BJ (cell line): ENCODE measurements at regions of chr5 and their contacts with region 1.

Region 1: DNA sequence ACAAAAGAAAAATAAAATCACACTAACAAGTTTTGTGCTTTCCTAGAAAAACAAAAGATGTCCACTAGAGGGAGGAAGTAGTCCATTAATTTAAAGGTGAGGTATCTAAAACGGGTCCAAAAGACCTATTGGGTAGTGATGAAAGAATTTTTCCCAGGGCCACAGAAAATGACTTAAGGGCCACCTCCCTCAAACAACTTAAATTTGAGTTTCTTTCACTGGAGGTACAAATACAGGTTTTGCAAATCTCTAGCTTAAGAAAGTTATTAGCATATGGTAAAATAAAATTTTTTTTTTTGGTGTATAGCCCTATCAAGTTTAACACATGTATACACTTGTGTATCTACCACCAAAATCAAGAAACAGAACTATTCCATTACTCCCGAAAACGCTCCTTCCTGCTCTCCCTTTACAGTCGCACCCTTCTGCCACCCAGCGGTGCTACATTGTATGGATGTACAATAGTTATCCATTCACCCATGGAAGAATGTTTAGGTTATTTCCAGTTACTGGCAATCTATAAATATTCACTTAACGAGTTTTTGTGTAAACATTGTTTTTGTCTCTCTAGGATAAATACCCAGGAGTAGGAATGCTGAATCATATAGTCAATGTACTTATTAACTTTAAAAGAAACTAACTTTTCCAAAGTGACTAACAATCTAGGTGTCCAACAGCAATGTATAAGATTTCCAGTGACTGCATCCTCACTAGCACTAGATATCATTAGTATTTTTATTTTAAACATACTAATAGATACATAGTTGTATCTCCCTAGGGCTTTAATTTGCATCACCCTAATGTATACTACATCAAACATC is 21.9 kb downstream of the DEPDC1B start:
- DNase-seq: no peak
- H3K4me3 ChIP-seq: no peak overlapping the region
- H3K27me3 ChIP-seq: no peaks in the 10 kb centered on the region
- CTCF ChIP-seq: peak; percentile 45

Region 2: DNA sequence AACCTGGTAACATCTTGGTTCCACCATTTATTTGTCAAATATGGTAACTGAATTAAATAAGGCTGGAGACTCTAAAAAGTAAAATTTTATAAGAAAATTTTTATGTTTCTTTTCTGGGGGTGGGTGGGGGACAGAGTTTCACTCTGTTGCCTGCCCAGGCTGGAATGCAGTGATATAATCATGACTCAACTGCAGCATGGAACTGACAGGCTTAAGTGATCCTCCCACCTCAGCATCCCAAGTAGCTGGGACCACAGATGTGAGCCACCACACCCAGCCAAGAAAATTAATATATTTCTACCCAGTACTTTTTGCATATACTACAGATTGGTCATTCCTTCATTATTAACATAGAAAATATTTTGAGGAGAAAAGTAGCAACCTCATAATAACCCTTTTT is 195.0 kb before region 1 on chr5:
- CTCF ChIA-PET with region 1: no interaction called
- POLR2A ChIA-PET with region 1: no interaction called
- DNase-seq: no peak
- H3K4me3 ChIP-seq: no peak overlapping the region
- H3K27me3 ChIP-seq: no peaks in the 10 kb centered on the region
- CTCF ChIP-seq: no peak

Region 3: DNA sequence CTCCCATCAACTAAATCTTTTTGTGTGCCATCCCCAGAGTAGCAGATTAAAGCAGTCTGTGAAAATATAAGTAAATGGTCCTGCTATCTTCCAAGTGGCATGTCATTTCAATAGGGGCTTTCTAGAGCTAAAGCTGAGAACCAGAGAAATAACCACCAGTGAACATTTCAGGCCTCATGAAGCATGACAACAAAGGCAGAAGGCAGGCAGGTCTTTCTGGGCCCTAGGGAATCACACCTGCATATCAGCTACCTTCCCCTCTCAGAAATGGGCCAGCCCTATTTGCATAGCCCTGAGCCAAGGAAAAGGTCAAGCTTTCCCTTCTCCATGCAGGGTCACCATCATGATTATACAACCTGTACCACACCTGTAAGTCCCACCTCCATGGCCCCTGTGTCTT is 183.4 kb before region 1 on chr5:
- CTCF ChIA-PET with region 1: no interaction called
- POLR2A ChIA-PET with region 1: no interaction called
- DNase-seq: no peak
- H3K4me3 ChIP-seq: no peak overlapping the region
- H3K27me3 ChIP-seq: no peaks in the 10 kb centered on the region
- CTCF ChIP-seq: no peak

Region 4: DNA sequence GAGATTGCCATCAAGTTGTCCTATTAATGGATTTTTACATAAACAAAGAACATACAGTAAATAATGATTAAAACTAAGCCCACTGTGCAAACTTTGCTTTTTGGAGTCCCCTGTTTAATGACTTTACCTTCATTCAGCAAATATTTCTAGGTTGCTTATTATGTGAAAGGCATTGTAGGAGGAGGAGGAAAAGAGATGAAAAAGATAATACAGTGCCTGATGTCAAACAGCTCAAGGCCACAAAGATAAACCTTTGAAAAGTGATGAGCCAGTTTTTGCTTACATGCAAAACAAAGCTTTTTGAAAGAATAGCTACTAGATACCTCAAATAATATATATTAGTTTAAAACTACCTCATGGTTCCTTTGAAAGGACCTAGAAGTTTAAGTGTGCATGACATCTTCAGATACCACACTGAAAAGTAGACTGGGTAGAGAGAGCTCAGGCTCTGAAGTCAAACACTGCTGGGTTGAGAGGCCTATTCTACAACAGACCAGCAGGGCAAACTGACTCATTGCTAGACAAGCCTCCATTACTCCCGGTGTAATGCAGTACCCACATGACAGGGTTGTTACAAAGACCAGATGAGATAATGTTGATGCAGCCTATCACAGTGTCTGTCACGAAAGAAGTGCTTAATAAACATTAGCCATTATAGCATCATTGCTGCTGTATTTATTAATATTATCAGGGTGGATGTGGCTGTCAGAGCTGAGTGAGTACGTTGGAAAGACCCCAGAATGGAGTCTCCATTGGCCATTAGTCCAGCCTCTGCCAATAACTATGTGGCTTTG is 10.1 kb after region 1 on chr5:
- CTCF ChIA-PET with region 1: interaction called, 10 read pairs
- POLR2A ChIA-PET with region 1: no interaction called
- DNase-seq: no peak
- H3K4me3 ChIP-seq: no peak overlapping the region
- H3K27me3 ChIP-seq: no peaks in the 10 kb centered on the region
- CTCF ChIP-seq: peak; percentile 51

Region 5: DNA sequence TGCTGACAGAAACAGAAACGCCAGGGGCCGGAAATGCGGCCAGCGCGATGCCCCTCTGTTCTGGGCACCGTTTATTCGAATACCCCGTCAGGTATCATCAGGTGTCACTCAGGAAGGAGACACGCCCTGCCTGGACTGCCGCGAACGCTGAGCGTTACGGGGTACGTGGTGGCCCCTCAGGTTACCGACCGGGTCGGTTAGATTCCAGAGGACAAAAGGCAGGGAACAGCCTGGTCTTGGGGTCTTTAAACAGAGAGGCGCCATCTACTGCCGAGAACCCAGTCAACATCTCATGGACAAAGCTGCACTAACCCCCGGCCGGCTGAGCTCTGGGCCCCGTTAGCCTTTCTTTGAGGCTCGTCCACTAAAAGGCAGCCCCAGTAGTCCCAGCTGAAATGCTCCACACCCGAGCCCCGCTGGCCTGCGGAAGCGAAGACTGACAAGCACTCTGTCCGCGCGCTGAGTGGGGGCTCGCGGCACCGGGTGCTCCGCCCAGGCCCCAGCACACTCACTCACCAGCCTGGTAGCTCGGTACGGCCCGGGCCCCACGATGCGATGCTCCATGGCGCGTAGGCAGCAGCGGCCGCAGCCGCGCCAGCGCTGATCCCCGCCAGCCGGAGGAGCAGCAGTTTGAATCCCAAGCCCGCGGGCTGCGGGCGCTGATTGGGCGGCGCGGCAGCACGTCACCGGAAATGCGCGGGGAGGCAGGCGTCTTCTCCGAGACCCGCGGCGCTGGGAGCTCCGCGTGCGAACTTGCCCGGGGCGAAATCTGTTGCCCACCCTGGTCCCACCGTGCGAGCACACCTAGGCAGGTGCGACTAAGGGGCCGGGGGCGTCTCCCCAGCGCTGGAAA is 21.7 kb after region 1 on chr5 and contains the start of gene DEPDC1B:
- CTCF ChIA-PET with region 1: interaction called, 24 read pairs
- POLR2A ChIA-PET with region 1: no interaction called
- DNase-seq: peak; percentile 37
- H3K4me3 ChIP-seq: peak within 1 kb of the TSS; percentile 91
- H3K27me3 ChIP-seq: peaks cover 2% of the 10 kb centered on the region; the same call in 1 of the 2 replicates
- CTCF ChIP-seq: peak; percentile 56
- polyA plus RNA-seq, gene DEPDC1B: 6.5 and 6.8 TPM in 2 replicates

Region 6: DNA sequence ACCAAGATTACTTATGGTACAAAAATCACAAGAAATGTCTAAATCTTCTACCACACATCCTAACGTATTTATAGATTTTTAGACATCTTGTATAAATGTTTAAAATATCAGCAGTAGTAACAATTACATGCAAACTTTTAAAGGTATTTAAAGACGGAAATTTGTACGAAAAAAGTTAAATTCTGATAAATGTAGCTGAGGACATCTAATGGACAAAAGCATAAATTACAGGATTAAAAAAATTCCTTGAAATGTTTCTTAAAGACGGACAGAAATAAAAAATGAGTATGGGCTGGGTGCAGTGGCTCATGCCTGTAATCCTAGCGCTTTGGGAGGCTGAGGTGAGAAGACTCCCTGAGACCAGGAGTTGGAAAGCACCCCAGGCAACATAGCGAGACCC is 251.0 kb after region 1 on chr5:
- CTCF ChIA-PET with region 1: interaction called, 10 read pairs
- POLR2A ChIA-PET with region 1: no interaction called
- DNase-seq: no peak
- H3K4me3 ChIP-seq: no peak overlapping the region
- H3K27me3 ChIP-seq: no peaks in the 10 kb centered on the region
- CTCF ChIP-seq: peak; percentile 23